MCF 10A (cell line): ENCODE measurements at regions of chr17 and their contacts with region 1.

Region 1: DNA sequence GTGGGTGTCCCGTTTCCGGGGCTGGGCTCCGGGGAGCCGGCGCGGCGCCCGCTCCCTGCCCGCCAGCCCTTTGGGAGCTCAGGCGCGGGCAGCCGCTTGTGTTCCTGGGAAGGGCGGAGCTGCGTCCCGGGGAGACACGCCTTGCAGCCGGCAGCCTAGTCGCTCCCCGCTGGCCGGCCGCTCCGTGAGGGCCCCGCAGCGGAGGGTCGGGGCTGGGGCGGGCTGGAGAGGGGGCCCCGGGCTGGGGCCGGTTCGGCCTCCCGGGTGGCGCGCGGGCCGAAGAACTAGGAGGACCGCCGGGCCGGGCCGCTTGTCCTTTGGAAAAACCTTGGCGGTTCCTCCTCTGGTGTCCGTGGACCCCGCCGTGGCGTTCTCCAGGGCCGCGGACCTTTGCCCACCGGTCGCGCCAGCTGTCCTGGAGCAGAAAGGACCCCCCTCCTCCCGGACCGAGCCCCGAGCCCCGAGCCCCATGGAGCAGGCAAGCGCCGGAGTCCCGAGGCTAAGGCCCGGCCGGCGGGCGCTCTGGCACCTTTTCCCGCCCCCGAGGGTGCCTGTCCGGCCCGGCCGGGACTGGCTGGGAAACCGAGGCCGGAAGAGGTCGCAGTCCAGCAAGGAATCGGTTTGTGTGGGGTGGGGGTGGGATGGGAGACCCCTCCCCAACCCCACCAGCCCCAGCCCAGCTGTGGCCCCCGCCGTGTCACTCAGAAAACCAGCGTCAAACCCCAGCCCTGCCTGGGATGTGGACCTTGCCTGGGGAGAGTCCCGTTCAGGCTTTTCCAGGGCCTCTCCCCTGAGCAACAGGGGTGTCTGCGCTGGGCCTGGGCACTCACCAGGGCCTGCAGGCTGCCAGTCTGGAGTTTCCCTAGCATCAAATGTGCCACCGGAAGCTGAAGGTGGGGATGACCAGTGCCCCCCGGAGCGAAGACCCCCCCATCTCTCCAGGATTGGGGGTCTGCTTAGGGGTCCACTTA is 6.8 kb upstream of the TBC1D3B start:
- DNase-seq: peak; percentile 63
- H3K4me3 Mint-ChIP-seq: peak overlapping the region; percentile 56
- H3K27ac Mint-ChIP-seq: no peak overlapping the region
- H3K4me1 Mint-ChIP-seq: no peaks in the 10 kb centered on the region
- H3K27me3 Mint-ChIP-seq: peaks cover 71% of the 10 kb centered on the region
- CTCF ChIP-seq: no peak

Region 2: GRCh38 chr17:36117505-36118382 is 65.5 kb before region 1 on chr17:
- CTCF ChIA-PET with region 1: no interaction called
- POLR2A ChIA-PET with region 1: interaction called, 3 read pairs
- intact Hi-C with region 1: loop called (anchors 10 kb)
- DNase-seq: no peak
- H3K4me3 Mint-ChIP-seq: no peak overlapping the region
- H3K27ac Mint-ChIP-seq: no peak overlapping the region
- H3K4me1 Mint-ChIP-seq: peaks cover 6% of the 10 kb centered on the region
- H3K27me3 Mint-ChIP-seq: peaks cover 44% of the 10 kb centered on the region
- CTCF ChIP-seq: no peak